ENCODE measurements at regions of chr9 and their contacts with region 1.

Region 1: DNA sequence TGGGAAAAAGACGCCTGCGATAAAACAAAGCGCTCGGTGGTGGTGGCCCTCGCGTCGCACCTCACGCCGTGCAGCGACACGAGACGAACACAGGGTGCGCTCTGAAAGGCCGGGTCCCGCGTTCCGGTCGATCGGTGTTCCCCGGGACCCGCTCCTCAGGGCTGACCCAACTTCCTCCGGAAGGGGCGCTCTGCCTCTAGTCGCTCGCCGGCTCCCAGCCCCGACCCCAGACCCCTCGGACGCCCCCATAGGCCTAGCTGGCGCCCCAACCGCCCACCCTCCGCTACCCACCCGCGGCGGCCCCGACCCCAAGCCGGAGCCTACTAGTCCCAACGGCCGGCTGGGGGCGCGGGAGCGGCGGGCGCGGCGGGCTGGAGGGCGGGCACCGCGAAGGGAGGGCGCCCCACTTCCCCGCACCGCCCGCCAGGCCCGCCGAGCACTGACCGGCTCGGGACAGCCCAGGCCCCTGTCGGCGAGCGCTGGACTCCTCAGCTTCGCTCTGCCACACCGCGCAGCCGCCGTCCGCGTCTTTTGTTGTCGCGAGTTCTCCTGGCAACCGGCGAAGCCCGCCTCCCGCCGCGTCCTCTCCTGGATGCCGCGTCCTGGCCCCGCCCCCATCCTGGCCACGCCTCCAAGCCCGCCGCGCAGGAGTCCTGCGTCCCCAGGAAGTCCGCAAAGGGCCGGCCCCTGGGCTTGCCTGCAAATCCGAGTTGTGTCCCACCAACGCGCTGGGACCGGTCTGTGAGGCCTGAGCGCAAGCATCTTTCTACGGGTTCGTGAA is at the start of gene KIF27:
- DNase-seq: peak; percentile 93 to 98 (median 96)
- ATAC-seq: peak; percentile 84
- H3K4me3 ChIP-seq: peak within 1 kb of the TSS; percentile 64 to 86
- H3K4me3 Mint-ChIP-seq: peak within 1 kb of the TSS; percentile 96
- H3K27ac ChIP-seq: peak within 1 kb of the TSS; percentile 92 to 93
- H3K27ac Mint-ChIP-seq: peak within 1 kb of the TSS; percentile 97
- H3K4me1 ChIP-seq: peaks cover 8% of the 10 kb centered on the region
- H3K4me1 Mint-ChIP-seq: peaks cover 15% of the 10 kb centered on the region
- H3K27me3 ChIP-seq: no peaks in the 10 kb centered on the region
- H3K27me3 Mint-ChIP-seq: no peaks in the 10 kb centered on the region
- CTCF ChIP-seq: peak; percentile 58
- total RNA-seq, gene KIF27: 2.9 to 3.8 TPM

Region 2: GRCh38 chr9:83334320-83334719 is 586.8 kb before region 1 on chr9:
- CTCF ChIA-PET with region 1: no interaction called
- POLR2A ChIA-PET with region 1: no interaction called
- intact Hi-C with region 1: loop called in 1 of 2 experiments (anchors 5 kb)
- DNase-seq: peak; percentile 33 to 72 (median 57)
- ATAC-seq: peak; percentile 23
- H3K4me3 ChIP-seq: no peak overlapping the region
- H3K4me3 Mint-ChIP-seq: no peak overlapping the region
- H3K27ac ChIP-seq: no peak overlapping the region
- H3K27ac Mint-ChIP-seq: no peak overlapping the region
- H3K4me1 ChIP-seq: no peaks in the 10 kb centered on the region
- H3K4me1 Mint-ChIP-seq: no peaks in the 10 kb centered on the region
- H3K27me3 ChIP-seq: no peaks in the 10 kb centered on the region
- H3K27me3 Mint-ChIP-seq: no peaks in the 10 kb centered on the region
- CTCF ChIP-seq: peak; percentile 70

Region 3: GRCh38 chr9:83707768-83708514 is 213.2 kb before region 1 on chr9 and contains the start of gene UBQLN1:
- CTCF ChIA-PET with region 1: no interaction called
- POLR2A ChIA-PET with region 1: interaction called, 20 read pairs
- intact Hi-C with region 1: loop called (anchors 1 to 2 kb)
- DNase-seq: peak; percentile 83 to 97 (median 91)
- ATAC-seq: peak; percentile 80
- H3K4me3 ChIP-seq: peak within 1 kb of the TSS; percentile 89 to 97
- H3K4me3 Mint-ChIP-seq: peak within 1 kb of the TSS; percentile 85
- H3K27ac ChIP-seq: peak within 1 kb of the TSS; percentile 98 to 99
- H3K27ac Mint-ChIP-seq: peak within 1 kb of the TSS; percentile 100
- H3K4me1 ChIP-seq: peaks cover 40% of the 10 kb centered on the region
- H3K4me1 Mint-ChIP-seq: peaks cover 43% of the 10 kb centered on the region
- H3K27me3 ChIP-seq: no peaks in the 10 kb centered on the region
- H3K27me3 Mint-ChIP-seq: no peaks in the 10 kb centered on the region
- CTCF ChIP-seq: no peak
- total RNA-seq, gene UBQLN1: 163 to 169 TPM

Region 4: DNA sequence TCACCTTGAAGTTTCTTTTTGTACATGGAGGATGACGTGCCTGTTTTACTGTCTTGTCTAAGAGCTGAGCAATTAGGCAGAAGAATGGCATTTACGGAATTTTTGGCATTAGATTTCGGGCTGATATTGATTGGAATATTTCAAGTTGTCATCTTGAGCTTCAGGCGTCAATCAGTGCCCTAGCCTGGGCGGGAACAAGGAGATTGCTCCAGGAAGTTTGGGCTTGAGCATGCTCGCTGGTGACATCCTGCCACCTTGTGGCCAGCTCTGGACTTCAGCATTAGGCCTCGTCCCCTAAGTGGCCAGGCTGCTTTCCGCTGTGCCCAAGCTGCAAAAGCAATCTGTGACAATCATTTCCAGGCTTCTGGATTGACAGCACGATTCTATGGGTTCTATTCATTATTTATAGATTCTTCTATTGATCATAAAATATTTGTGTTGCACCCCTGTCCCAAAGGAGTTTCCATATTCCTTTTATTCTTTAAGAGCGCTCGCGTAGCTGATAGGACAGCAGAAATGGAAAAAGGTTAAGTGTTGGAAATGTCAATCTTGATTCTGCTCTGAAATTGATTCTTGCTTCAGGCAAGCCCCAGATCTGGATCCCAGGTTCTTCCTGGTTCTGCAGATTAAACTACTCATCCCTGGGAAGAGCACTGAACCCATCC is 340.1 kb after region 1 on chr9:
- CTCF ChIA-PET with region 1: interaction called, 5 read pairs
- POLR2A ChIA-PET with region 1: no interaction called
- intact Hi-C with region 1: loop called in 1 of 2 experiments (anchors 5 kb)
- DNase-seq: peak in 8 of 9 experiments; percentile 17 to 63 (median 48)
- ATAC-seq: no peak
- H3K4me3 ChIP-seq: no peak overlapping the region
- H3K4me3 Mint-ChIP-seq: peak overlapping the region; percentile 43
- H3K27ac ChIP-seq: no peak overlapping the region
- H3K27ac Mint-ChIP-seq: no peak overlapping the region
- H3K4me1 ChIP-seq: no peaks in the 10 kb centered on the region
- H3K4me1 Mint-ChIP-seq: peaks cover 6% of the 10 kb centered on the region
- H3K27me3 ChIP-seq: no peaks in the 10 kb centered on the region
- H3K27me3 Mint-ChIP-seq: peaks cover 3% of the 10 kb centered on the region
- CTCF ChIP-seq: peak; percentile 57

Region 5: DNA sequence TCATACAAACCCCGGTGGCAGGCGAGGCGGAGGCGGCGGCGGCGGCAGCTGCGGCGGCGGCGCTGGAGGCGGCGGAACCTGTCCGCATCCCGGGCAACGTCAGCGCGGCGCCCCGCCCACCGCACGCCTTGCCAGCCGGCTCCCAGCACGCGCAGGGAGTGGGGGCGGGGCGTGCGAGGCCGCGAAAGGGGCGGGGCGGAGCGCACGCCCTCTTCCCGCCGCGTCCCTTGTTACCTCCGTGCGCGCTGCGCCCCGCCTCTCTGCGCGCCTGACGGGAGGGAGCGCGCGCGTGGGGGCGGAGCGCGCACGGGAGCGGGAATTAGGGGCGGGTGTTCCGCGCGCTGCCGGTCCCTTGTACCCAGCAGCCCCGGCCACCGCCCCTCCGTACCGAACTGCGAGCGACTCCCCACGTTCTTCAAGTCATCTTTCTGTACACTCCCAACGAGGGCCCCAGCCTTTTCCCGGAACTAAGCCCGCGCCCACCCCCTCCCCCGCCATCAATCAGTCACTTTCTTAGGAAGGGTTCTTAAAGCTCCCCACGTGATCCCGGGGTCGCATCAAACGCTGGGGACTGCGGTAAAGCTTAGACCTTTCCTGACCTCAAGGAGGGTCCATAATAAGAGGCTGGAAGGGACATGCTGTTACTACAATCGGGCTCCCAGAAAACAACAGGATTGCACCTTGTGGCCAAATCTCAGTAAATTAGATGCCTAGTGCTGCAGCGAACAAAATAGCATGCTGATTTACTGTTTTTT is 1820.9 kb after region 1 on chr9 and contains the start of gene AGTPBP1:
- CTCF ChIA-PET with region 1: no interaction called
- POLR2A ChIA-PET with region 1: no interaction called
- intact Hi-C with region 1: loop called in 1 of 2 experiments (anchors 5 kb)
- DNase-seq: peak; percentile 90 to 99 (median 97)
- ATAC-seq: peak; percentile 85
- H3K4me3 ChIP-seq: peak within 1 kb of the TSS; percentile 78 to 89
- H3K4me3 Mint-ChIP-seq: peak within 1 kb of the TSS; percentile 96
- H3K27ac ChIP-seq: peak within 1 kb of the TSS; percentile 83 to 93
- H3K27ac Mint-ChIP-seq: peak within 1 kb of the TSS; percentile 98
- H3K4me1 ChIP-seq: peaks cover 12% of the 10 kb centered on the region
- H3K4me1 Mint-ChIP-seq: peaks cover 40% of the 10 kb centered on the region
- H3K27me3 ChIP-seq: no peaks in the 10 kb centered on the region
- H3K27me3 Mint-ChIP-seq: no peaks in the 10 kb centered on the region
- CTCF ChIP-seq: no peak
- total RNA-seq, gene AGTPBP1: 58.3 to 58.4 TPM

Measured in CD8-positive, alpha-beta T cell (primary cell).